PC-9 (cell line): ENCODE measurements at regions of chr2 and their contacts with region 1.

Region 1: DNA sequence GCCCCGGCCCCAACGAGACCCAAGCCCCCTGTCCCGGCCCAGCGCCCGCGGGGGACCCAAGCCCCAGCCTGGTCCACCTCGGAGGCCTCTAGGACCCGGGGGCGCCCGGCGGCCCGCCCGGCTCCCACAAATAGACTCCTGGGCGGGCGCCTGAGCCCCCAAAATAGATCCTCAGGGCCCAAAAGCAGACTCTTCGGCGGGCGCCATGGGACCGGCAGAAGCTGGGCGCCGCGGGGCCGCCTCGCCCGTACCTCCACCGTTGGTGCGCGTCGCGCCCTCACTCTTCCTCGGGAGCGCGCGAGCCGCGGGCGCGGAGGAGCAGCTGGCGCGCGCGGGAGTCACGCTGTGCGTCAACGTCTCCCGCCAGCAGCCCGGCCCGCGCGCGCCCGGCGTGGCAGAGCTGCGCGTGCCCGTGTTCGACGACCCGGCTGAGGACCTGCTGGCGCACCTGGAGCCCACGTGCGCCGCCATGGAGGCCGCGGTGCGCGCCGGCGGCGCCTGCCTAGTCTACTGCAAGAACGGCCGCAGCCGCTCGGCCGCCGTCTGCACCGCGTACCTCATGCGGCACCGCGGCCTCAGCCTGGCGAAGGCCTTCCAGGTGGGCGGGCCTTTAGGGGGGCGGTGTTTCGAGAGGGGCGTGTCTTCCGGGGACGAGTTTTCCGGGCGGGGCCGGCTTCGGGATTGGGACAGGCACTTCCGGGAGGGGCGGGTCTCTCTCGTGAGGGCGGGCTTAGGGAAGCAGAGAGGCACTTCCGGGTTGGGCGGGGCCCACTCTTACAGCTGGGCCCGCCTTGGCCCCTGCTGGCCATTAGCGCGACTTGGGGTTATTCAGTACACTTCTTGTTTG is 546 bp downstream of the DUSP28 start:
- DNase-seq: peak; percentile 94 to 100
- H3K4me3 ChIP-seq: peak overlapping the region; percentile 75
- H3K27ac ChIP-seq: peak overlapping the region; percentile 95
- H3K4me1 ChIP-seq: peaks cover 55% of the 10 kb centered on the region
- H3K27me3 ChIP-seq: no peaks in the 10 kb centered on the region
- CTCF ChIP-seq: no peak

Region 2: DNA sequence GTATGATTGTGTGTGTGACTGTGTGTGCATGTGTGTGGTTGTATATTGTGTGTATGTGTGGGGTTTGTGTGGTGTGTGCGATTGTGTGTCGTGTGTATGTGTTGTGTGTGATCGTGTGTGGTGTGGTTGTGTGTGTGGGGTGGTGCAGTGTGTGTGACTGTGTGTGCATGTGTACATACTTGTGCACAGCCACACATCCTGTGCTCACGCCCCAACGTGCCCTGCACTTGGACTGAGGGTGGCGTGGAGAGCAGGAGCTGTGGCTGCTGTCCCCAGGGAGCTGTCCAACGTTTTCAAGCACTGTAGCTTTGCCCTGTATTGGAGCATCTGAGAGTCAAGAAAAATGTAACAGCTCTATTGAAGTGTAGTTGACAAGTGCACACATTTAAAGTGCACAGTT is 916.7 kb before region 1 on chr2:
- CTCF ChIA-PET with region 1: no interaction called
- POLR2A ChIA-PET with region 1: no interaction called
- intact Hi-C with region 1: no loop called
- DNase-seq: no peak
- H3K4me3 ChIP-seq: no peak overlapping the region
- H3K27ac ChIP-seq: no peak overlapping the region
- H3K4me1 ChIP-seq: no peaks in the 10 kb centered on the region
- H3K27me3 ChIP-seq: peaks cover 61% of the 10 kb centered on the region
- CTCF ChIP-seq: no peak

Region 3: DNA sequence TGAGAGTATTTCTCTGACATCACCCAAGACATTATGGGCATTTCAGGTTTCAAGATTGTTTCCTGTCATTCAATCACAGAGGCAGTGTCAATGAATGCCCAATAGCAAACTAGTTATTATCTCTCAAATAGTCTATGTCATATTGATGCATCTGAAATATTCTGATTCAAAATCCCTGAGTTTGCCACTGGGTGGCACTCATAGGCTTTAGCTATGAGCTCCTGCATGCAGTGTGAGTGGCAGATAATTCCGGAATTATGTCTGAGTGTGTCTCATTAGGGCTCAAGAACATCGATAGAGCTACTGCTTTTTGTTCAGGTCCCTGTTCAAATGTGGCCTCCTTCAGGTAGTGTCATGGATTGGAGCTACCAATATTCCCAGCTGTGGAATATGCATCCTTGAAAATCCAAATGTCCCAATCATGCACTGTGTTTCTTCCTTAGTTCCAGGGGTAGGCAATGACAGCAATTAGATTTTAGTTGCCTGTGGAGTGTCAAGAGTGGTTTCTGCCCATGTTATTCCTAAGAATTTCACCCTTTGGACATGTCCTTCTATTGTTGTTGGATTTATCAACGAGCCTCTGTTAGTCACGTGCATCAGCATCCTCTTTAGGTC is 499.6 kb before region 1 on chr2:
- CTCF ChIA-PET with region 1: no interaction called
- POLR2A ChIA-PET with region 1: no interaction called
- intact Hi-C with region 1: loop called (anchors 10 kb)
- DNase-seq: peak; percentile 54 to 55
- H3K4me3 ChIP-seq: no peak overlapping the region
- H3K27ac ChIP-seq: no peak overlapping the region
- H3K4me1 ChIP-seq: no peaks in the 10 kb centered on the region
- H3K27me3 ChIP-seq: peaks cover 90% of the 10 kb centered on the region
- CTCF ChIP-seq: peak; percentile 84

Region 4: DNA sequence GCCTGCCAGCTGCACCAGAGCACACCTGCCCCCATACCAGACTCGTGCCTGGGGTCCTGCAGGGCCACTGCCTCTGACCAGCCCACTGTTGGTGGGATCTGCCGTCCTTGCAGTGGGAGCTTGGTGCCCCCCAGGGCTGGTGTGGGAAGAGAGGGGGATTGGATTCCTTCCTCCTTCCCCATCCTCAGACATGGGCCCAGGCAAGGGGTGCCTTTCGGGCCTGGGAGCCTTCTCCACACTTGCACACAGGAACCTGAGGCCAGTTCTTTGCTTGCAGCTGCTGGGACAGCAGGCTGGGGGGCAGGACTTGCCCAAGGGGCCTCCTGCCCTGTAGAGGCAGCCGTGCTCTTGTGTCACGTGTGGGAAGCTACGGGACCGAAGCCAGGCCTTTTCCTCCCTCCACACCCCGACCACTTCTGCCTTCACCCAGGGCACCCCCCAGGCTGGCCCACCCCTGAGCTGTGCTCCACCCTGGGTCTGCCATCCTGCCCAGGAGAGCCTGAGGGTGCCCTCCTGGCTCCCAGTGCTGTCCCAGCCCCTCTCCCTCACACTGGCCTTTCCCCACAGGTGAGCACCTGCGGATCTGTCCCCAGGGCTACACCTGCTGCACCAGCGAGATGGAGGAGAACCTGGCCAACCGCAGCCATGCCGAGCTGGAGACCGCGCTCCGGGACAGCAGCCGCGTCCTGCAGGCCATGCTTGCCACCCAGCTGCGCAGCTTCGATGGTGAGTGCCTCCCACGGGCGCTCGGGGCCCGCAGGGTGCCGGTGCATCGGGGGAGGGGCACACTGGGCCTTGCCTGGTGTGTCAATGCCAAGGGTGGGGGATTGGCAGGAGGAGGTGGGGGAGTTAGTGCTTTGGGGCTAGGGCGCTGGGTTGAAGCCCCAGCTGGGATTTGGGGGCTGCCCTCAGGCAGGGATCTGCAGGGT is 102.0 kb before region 1 on chr2:
- CTCF ChIA-PET with region 1: interaction called, 5 read pairs
- POLR2A ChIA-PET with region 1: no interaction called
- intact Hi-C with region 1: loop called (anchors 1 kb)
- DNase-seq: no peak
- H3K4me3 ChIP-seq: no peak overlapping the region; the same call in 1 of the 2 replicates
- H3K27ac ChIP-seq: peak overlapping the region; percentile 84
- H3K4me1 ChIP-seq: peaks cover 56% of the 10 kb centered on the region
- H3K27me3 ChIP-seq: no peaks in the 10 kb centered on the region
- CTCF ChIP-seq: no peak

Region 5: GRCh38 chr2:240579771-240580614 is 19.3 kb after region 1 on chr2:
- CTCF ChIA-PET with region 1: interaction called, 34 read pairs
- POLR2A ChIA-PET with region 1: interaction called, 24 read pairs
- intact Hi-C with region 1: loop called (anchors 1 kb)
- DNase-seq: peak; percentile 97 to 99
- H3K4me3 ChIP-seq: peak overlapping the region; percentile 46; the same call in 1 of the 2 replicates
- H3K27ac ChIP-seq: peak overlapping the region; percentile 98
- H3K4me1 ChIP-seq: peaks cover 60% of the 10 kb centered on the region
- H3K27me3 ChIP-seq: no peaks in the 10 kb centered on the region
- CTCF ChIP-seq: peak; percentile 97

Region 6: GRCh38 chr2:240648650-240649275 is 88.1 kb after region 1 on chr2:
- CTCF ChIA-PET with region 1: no interaction called
- POLR2A ChIA-PET with region 1: no interaction called
- intact Hi-C with region 1: no loop called
- DNase-seq: no peak
- H3K4me3 ChIP-seq: no peak overlapping the region
- H3K27ac ChIP-seq: no peak overlapping the region
- H3K4me1 ChIP-seq: no peaks in the 10 kb centered on the region
- H3K27me3 ChIP-seq: peaks cover 99% of the 10 kb centered on the region
- CTCF ChIP-seq: no peak

Region 7: GRCh38 chr2:240739797-240740196 is 179.1 kb after region 1 on chr2:
- CTCF ChIA-PET with region 1: no interaction called
- POLR2A ChIA-PET with region 1: interaction called, 17 read pairs
- intact Hi-C with region 1: no loop called
- DNase-seq: peak in 1 of 2 experiments; percentile 68
- H3K4me3 ChIP-seq: no peak overlapping the region
- H3K27ac ChIP-seq: no peak overlapping the region
- H3K4me1 ChIP-seq: no peaks in the 10 kb centered on the region; the same call in 1 of the 2 replicates
- H3K27me3 ChIP-seq: peaks cover 29% of the 10 kb centered on the region
- CTCF ChIP-seq: no peak